PC-3 (cell line): ENCODE measurements at regions of chr5 and their contacts with region 1.

Region 1: GRCh38 chr5:172984243-172984953 is 827 bp downstream of the ATP6V0E1 start:
- DNase-seq: peak; percentile 67
- ATAC-seq: peak; percentile 61
- H3K4me3 ChIP-seq: peak overlapping the region; percentile 86
- H3K27ac ChIP-seq: peak overlapping the region; percentile 62
- H3K4me1 ChIP-seq: peaks cover 13% of the 10 kb centered on the region
- H3K27me3 ChIP-seq: no peaks in the 10 kb centered on the region
- CTCF ChIP-seq: peak; percentile 56

Region 2: DNA sequence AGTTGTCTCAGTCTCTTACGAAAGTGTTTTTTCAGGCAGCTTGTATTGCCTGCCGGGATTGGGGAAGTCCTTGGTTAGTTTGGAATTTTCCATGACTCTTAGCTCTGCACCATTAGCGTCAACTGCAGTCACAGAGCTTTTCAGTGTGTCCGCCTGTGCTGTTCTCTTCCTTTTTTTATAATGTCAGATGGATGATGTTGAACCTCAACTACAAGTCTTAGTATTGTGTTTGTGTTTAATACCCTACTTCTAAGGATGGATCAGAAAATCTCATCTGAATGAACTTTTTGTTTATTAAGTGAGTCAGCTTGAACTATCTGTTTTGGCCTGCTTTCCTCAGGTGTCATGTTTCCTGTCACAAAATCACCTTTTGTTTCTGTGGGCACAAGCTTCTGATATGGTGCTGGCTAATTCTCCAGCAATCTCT is 32.2 kb after region 1 on chr5:
- CTCF ChIA-PET with region 1: no interaction called
- POLR2A ChIA-PET with region 1: no interaction called
- intact Hi-C with region 1: loop called (anchors 2 kb)
- DNase-seq: peak; percentile 77
- ATAC-seq: peak; percentile 94
- H3K4me3 ChIP-seq: no peak overlapping the region
- H3K27ac ChIP-seq: peak overlapping the region; percentile 58
- H3K4me1 ChIP-seq: peaks cover 22% of the 10 kb centered on the region
- H3K27me3 ChIP-seq: no peaks in the 10 kb centered on the region
- CTCF ChIP-seq: no peak

Region 3: GRCh38 chr5:173144200-173145176 is 160.1 kb after region 1 on chr5 and contains the start of gene BNIP1:
- CTCF ChIA-PET with region 1: no interaction called
- POLR2A ChIA-PET with region 1: no interaction called
- intact Hi-C with region 1: loop called (anchors 1 kb)
- DNase-seq: peak; percentile 97
- ATAC-seq: peak; percentile 97
- H3K4me3 ChIP-seq: peak within 1 kb of the TSS; percentile 88
- H3K27ac ChIP-seq: peak within 1 kb of the TSS; percentile 82
- H3K4me1 ChIP-seq: no peaks in the 10 kb centered on the region; the same call in 1 of the 2 replicates
- H3K27me3 ChIP-seq: no peaks in the 10 kb centered on the region
- CTCF ChIP-seq: peak; percentile 79
- total RNA-seq, gene BNIP1: 17.0 and 21.5 TPM in 2 replicates

Region 4: DNA sequence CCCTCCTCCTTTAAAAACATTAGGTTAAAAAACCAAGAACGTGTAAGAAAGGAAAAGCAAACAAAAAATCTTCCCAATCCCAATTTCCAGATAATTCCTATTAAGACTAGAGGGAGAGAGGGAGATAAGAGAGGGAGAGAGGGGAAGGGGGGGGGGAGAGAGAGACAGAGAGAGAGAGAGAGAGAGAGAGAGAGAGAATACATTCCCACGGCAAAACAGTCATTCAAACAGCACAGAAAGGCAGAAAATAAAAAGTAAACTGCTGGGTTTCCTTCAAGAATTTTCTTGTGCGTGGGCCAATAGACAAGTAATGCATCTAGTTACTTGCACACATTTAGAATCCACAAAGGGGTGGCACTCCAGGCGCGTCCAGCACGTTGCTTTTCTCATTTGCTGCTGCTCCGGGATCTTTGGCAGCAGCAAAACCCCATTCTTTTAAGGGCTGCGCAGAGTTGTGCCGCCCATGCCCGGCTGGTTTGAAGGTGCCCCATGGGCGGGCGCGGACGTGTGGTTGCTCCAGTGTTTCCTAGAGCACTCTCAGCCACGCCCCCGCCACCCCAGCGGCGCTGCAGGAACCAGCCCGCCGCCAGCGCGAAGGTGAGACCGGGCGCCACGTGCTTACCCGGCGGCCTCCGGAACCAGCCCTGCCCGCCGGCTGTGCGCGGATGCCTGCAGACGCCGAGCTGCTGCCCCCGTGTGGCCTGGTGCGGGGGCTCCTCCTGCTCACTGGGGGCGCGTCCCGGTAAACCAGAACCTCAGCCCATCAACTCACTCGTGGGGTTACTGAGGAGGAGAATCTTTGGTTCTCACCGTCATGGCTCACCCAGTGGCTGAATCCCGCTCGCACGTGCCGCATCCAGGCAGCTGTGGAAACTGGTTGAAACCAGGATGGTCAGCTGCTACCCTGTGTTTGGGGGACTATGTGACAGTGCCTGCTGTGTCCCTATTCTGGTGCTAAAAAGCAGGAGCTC is 299.2 kb after region 1 on chr5:
- CTCF ChIA-PET with region 1: interaction called, 3 read pairs
- POLR2A ChIA-PET with region 1: no interaction called
- intact Hi-C with region 1: loop called (anchors 5 kb)
- DNase-seq: peak; percentile 78
- ATAC-seq: peak; percentile 94
- H3K4me3 ChIP-seq: peak overlapping the region; percentile 60
- H3K27ac ChIP-seq: no peak overlapping the region
- H3K4me1 ChIP-seq: no peaks in the 10 kb centered on the region
- H3K27me3 ChIP-seq: no peaks in the 10 kb centered on the region
- CTCF ChIP-seq: peak; percentile 77